ENCODE measurements at regions of chr14 and their contacts with region 1.

Region 1: GRCh38 chr14:89915114-89915878 is 39.2 kb downstream of the EFCAB11 start:
- DNase-seq: peak; percentile 56
- H3K4me3 Mint-ChIP-seq: no peak overlapping the region
- H3K27ac Mint-ChIP-seq: no peak overlapping the region
- H3K4me1 Mint-ChIP-seq: peaks cover 27% of the 10 kb centered on the region
- H3K27me3 Mint-ChIP-seq: no peaks in the 10 kb centered on the region
- CTCF ChIP-seq: peak; percentile 77

Region 2: GRCh38 chr14:89178802-89179535 is 736.3 kb before region 1 on chr14:
- CTCF ChIA-PET with region 1: no interaction called
- intact Hi-C with region 1: loop called (anchors 1 kb)
- DNase-seq: no peak
- H3K4me3 Mint-ChIP-seq: no peak overlapping the region
- H3K27ac Mint-ChIP-seq: no peak overlapping the region
- H3K4me1 Mint-ChIP-seq: no peaks in the 10 kb centered on the region
- H3K27me3 Mint-ChIP-seq: no peaks in the 10 kb centered on the region
- CTCF ChIP-seq: no peak

Region 3: DNA sequence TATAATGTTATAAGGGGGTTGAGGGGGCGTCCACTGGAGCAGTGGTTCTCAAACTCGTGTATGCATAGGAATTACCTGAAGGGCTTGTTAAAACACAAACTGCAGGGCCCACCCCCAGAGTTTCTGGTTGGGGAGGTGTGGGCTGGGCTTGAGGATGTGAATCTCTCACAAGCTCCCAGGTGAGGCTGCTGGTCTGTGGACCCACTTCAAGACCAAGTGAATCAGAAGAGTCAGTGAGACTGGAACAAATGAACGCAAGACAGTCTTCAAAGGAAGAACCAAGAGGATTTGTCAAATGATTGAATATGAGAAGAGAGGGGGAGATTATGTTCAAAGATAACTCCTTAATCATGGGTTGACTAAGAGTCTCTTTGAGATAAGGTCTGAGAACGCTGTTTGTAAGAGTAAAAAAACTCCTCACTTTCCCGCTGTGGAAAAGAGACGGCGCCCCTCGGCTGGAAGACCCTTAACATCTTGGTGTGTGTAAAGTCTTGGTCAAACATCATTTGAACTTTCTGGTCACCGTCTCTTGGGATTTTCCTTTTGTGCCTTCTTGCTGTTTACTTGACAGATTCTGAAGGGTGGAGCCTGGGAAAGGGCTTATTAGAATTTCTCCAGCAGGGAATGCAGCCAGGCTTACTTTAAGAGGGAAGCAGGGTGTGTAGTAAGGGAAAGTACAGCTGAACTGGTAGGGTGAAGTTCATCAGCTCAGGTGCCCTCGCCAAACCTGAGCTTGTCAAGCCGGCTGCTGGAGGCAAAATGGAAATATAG is 492.9 kb before region 1 on chr14:
- CTCF ChIA-PET with region 1: no interaction called
- intact Hi-C with region 1: loop called (anchors 5 kb)
- DNase-seq: peak; percentile 1
- H3K4me3 Mint-ChIP-seq: no peak overlapping the region
- H3K27ac Mint-ChIP-seq: no peak overlapping the region
- H3K4me1 Mint-ChIP-seq: peaks cover 16% of the 10 kb centered on the region
- H3K27me3 Mint-ChIP-seq: no peaks in the 10 kb centered on the region
- CTCF ChIP-seq: no peak

Region 4: GRCh38 chr14:89504602-89505313 is 410.5 kb before region 1 on chr14:
- CTCF ChIA-PET with region 1: no interaction called
- intact Hi-C with region 1: loop called (anchors 10 kb)
- DNase-seq: no peak
- H3K4me3 Mint-ChIP-seq: no peak overlapping the region
- H3K27ac Mint-ChIP-seq: no peak overlapping the region
- H3K4me1 Mint-ChIP-seq: peaks cover 22% of the 10 kb centered on the region
- H3K27me3 Mint-ChIP-seq: no peaks in the 10 kb centered on the region
- CTCF ChIP-seq: no peak

Region 5: GRCh38 chr14:89855961-89856656 is 59.2 kb before region 1 on chr14:
- CTCF ChIA-PET with region 1: no interaction called
- intact Hi-C with region 1: no loop called
- DNase-seq: no peak
- H3K4me3 Mint-ChIP-seq: no peak overlapping the region
- H3K27ac Mint-ChIP-seq: no peak overlapping the region
- H3K4me1 Mint-ChIP-seq: no peaks in the 10 kb centered on the region
- H3K27me3 Mint-ChIP-seq: no peaks in the 10 kb centered on the region
- CTCF ChIP-seq: no peak

Region 6: GRCh38 chr14:89957791-89958190 is 42.5 kb after region 1 on chr14:
- CTCF ChIA-PET with region 1: no interaction called
- intact Hi-C with region 1: no loop called
- DNase-seq: no peak
- H3K4me3 Mint-ChIP-seq: peak overlapping the region; percentile 95
- H3K27ac Mint-ChIP-seq: no peak overlapping the region
- H3K4me1 Mint-ChIP-seq: peaks cover 33% of the 10 kb centered on the region
- H3K27me3 Mint-ChIP-seq: no peaks in the 10 kb centered on the region
- CTCF ChIP-seq: no peak

Region 7: GRCh38 chr14:90087433-90087832 is 172.1 kb after region 1 on chr14:
- CTCF ChIA-PET with region 1: no interaction called
- intact Hi-C with region 1: no loop called
- DNase-seq: no peak
- H3K4me3 Mint-ChIP-seq: no peak overlapping the region
- H3K27ac Mint-ChIP-seq: no peak overlapping the region
- H3K4me1 Mint-ChIP-seq: no peaks in the 10 kb centered on the region
- H3K27me3 Mint-ChIP-seq: peaks cover 4% of the 10 kb centered on the region
- CTCF ChIP-seq: no peak

Region 8: DNA sequence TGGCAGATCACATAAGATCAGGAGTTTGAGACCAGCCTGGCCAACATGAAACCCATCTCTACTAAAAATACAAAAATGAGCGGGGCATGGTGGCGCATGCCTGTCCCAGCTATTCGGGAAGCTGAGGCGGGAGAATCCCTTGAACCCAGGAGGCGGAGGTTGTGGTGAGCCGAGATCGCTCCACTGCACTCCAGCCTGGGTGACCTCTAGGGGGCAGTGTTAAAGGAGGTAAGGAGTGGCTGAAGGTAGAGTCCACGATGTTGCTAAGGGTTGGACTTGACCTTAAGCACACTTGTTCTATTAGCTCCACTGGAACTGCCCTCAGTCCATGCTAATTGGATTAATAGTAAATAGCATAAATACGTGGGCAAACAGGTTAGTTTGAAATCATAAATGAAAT is 278.6 kb after region 1 on chr14:
- CTCF ChIA-PET with region 1: no interaction called
- intact Hi-C with region 1: no loop called
- DNase-seq: peak; percentile 21
- H3K4me3 Mint-ChIP-seq: no peak overlapping the region
- H3K27ac Mint-ChIP-seq: no peak overlapping the region
- H3K4me1 Mint-ChIP-seq: peaks cover 10% of the 10 kb centered on the region
- H3K27me3 Mint-ChIP-seq: peaks cover 42% of the 10 kb centered on the region
- CTCF ChIP-seq: no peak

Measured in Calu3 (cell line).